ENCODE measurements at regions of chr16 and their contacts with region 1.

Region 1: GRCh38 chr16:48556913-48557351 is 53.0 kb downstream of the N4BP1 start:
- DNase-seq: no peak
- H3K4me3 ChIP-seq: no peak overlapping the region
- H3K27ac ChIP-seq: no peak overlapping the region
- H3K4me1 ChIP-seq: no peaks in the 10 kb centered on the region
- H3K27me3 ChIP-seq: no peaks in the 10 kb centered on the region
- CTCF ChIP-seq: no peak

Region 2: DNA sequence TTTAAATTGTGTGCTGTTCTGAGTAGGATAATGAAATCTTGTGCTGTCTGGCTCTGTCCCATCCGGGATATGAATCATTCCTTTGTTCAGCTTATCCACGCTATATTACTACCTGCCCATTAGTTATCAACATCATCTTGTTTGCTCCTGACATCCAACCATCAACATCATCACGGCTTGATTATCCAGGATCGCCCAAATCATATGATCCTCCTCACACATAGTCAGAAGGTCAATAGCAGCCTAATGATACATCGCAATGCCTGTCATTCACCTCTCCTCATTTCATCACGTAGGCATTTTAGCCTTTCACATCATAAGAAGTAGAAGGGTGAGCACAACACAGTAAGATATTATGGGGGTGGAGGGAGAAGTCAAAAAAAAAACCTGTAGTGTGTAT is 94.7 kb before region 1 on chr16:
- intact Hi-C with region 1: no loop called
- DNase-seq: no peak
- H3K4me3 ChIP-seq: no peak overlapping the region
- H3K27ac ChIP-seq: no peak overlapping the region
- H3K4me1 ChIP-seq: no peaks in the 10 kb centered on the region
- H3K27me3 ChIP-seq: no peaks in the 10 kb centered on the region
- CTCF ChIP-seq: no peak

Region 3: DNA sequence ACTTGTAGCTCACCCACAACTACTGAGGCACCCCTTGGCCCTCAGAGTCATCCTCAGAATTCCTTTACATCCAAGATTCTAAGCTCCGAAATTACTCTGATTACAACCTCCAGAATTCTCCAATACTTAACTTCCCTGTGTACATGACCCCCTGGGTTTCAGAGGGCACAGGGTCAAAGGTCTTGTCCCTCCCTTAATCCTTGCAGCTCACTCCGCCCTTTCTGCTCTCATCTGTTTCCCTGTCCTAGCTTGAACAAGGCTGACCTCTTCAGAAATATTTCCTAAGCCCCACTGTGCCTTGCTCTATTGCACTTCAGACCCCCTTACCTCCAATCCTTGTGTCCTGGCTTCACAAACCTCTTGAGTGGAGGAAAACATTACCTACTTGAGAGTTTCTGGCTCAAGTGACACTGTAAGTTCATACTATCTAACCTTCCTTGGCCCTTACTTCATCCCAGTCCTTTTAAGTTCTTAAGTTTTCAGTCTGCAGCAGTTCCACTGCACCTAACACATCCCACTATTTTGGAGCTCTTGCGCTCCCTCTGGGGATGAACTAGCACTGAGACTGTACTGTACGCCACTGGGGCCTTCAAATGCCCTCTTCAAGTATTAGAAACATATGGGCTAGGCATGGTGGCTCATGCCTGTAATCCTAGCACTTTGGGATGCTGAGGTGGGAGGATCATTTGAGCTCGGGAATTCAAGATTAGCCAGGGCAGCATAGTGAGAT is 46.9 kb after region 1 on chr16:
- intact Hi-C with region 1: loop called (anchors 5 kb)
- DNase-seq: peak; percentile 51
- H3K4me3 ChIP-seq: no peak overlapping the region
- H3K27ac ChIP-seq: no peak overlapping the region
- H3K4me1 ChIP-seq: peaks cover 18% of the 10 kb centered on the region
- H3K27me3 ChIP-seq: no peaks in the 10 kb centered on the region
- CTCF ChIP-seq: no peak

Measured in colonic mucosa (tissue), 4 donors.